Activated naive CD8-positive, alpha-beta T cell treated with anti-CD3 and anti-CD28 coated beads, Interleukin-2, amount 10 ng/mL, durations not matched to agents 7 days and 5 days (primary cell): ENCODE measurements at regions of chr4 and their contacts with region 1.

Region 1: GRCh38 chr4:148441986-148442831 is at the start of gene NR3C2:
- DNase-seq: peak; percentile 90
- ATAC-seq: peak; percentile 89
- H3K4me3 Mint-ChIP-seq: peak within 1 kb of the TSS; percentile 99
- H3K27ac Mint-ChIP-seq: peak within 1 kb of the TSS; percentile 92
- H3K4me1 Mint-ChIP-seq: peaks cover 13% of the 10 kb centered on the region
- H3K27me3 Mint-ChIP-seq: peaks cover 5% of the 10 kb centered on the region
- total RNA-seq, gene NR3C2: 19.5 to 24.4 TPM

Region 2: GRCh38 chr4:147984065-147984777 is 458.0 kb before region 1 on chr4:
- POLR2A ChIA-PET with region 1: interaction called, 10 read pairs
- DNase-seq: peak; percentile 36
- ATAC-seq: peak; percentile 65
- H3K4me3 Mint-ChIP-seq: no peak overlapping the region
- H3K27ac Mint-ChIP-seq: no peak overlapping the region
- H3K4me1 Mint-ChIP-seq: peaks cover 15% of the 10 kb centered on the region
- H3K27me3 Mint-ChIP-seq: no peaks in the 10 kb centered on the region

Region 3: GRCh38 chr4:148056869-148057268 is 385.3 kb before region 1 on chr4:
- POLR2A ChIA-PET with region 1: interaction called, 47 read pairs
- DNase-seq: peak; percentile 67
- ATAC-seq: peak; percentile 77
- H3K4me3 Mint-ChIP-seq: peak overlapping the region; percentile 52
- H3K27ac Mint-ChIP-seq: peak overlapping the region; percentile 53
- H3K4me1 Mint-ChIP-seq: peaks cover 78% of the 10 kb centered on the region
- H3K27me3 Mint-ChIP-seq: no peaks in the 10 kb centered on the region

Region 4: GRCh38 chr4:148216866-148217814 is 225.1 kb before region 1 on chr4:
- POLR2A ChIA-PET with region 1: interaction called, 16 read pairs
- DNase-seq: peak; percentile 35
- ATAC-seq: peak; percentile 84
- H3K4me3 Mint-ChIP-seq: peak overlapping the region; percentile 74
- H3K27ac Mint-ChIP-seq: peak overlapping the region; percentile 86
- H3K4me1 Mint-ChIP-seq: peaks cover 28% of the 10 kb centered on the region
- H3K27me3 Mint-ChIP-seq: no peaks in the 10 kb centered on the region